Tibial artery (tissue), 4 donors: ENCODE measurements at regions of chr5 and their contacts with region 1.

Region 1: DNA sequence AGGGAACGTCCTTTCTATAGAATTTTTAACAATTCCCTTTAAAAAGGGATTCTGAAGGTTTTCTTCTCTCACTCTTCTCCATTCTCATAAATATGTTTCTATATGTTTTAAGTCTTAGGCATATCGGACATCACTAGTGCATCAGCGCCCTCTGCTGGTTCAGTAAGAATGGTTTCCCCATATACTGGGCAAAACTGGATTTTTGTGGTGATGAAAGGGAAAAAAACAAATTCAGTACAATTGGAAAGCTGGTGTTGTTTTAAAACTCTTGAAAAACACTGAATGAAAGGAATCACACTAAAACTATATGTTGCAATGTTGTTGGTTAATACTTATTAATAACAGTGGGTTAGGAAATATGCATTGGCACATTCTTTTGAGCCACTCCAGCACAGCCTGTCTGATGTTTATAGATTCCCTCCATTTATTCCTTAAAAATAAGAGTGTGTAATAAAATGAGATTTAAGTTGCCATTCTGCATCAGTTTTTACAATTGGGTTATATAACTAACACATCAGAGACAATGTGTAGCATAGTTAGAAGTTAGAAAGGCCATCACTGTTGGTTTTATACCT is 15.8 kb downstream of the CWC27 start:
- DNase-seq: peak; percentile 66 to 67
- H3K4me3 ChIP-seq: no peak overlapping the region
- H3K27ac ChIP-seq: no peak overlapping the region
- H3K4me1 ChIP-seq: no peaks in the 10 kb centered on the region
- H3K27me3 ChIP-seq: no peaks in the 10 kb centered on the region
- CTCF ChIP-seq: peak; percentile 76 to 80

Region 2: DNA sequence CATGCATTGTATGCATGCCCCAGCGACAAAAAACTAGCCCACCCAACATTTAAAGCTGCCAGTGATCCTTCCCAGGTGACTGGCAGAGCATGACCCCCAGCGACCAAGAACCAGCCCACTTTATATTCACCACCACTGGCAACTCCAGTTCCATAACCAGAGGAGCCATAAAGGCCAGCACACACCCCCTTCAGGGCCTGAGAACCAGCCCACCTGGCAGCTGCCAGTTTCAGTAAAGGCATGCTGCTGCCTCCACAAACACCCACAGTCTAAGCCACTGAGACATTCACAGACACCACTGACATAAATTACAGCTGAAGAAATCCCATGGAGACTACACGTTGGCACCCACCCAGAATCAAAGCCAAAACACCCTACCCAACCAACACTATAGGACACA is 325.6 kb before region 1 on chr5:
- intact Hi-C with region 1: no loop called
- DNase-seq: no peak
- H3K4me3 ChIP-seq: no peak overlapping the region
- H3K27ac ChIP-seq: no peak overlapping the region
- H3K4me1 ChIP-seq: no peaks in the 10 kb centered on the region
- H3K27me3 ChIP-seq: no peaks in the 10 kb centered on the region
- CTCF ChIP-seq: no peak

Region 3: GRCh38 chr5:64634997-64635686 is 149.4 kb before region 1 on chr5:
- intact Hi-C with region 1: loop called (anchors 5 kb)
- DNase-seq: no peak
- H3K4me3 ChIP-seq: no peak overlapping the region
- H3K27ac ChIP-seq: no peak overlapping the region
- H3K4me1 ChIP-seq: no peaks in the 10 kb centered on the region
- H3K27me3 ChIP-seq: peaks cover 0 to 3% of the 10 kb centered on the region in 2 donors
- CTCF ChIP-seq: peak; percentile 71 to 80